ENCODE measurements at regions of chr6 and their contacts with region 1.

Region 1: GRCh38 chr6:111997078-111997852 is 56.6 kb upstream of the CCN6 start:
- DNase-seq: peak; percentile 81 to 88
- H3K4me3 ChIP-seq: no peak overlapping the region
- H3K27ac ChIP-seq: peak overlapping the region in 1 of 3 donors; percentile 30
- H3K4me1 ChIP-seq: peaks cover 0 to 10% of the 10 kb centered on the region in 2 donors
- H3K27me3 ChIP-seq: no peaks in the 10 kb centered on the region
- CTCF ChIP-seq: peak; percentile 61 to 98 (median 92)
- POLR2A ChIP-seq: no peak

Region 2: DNA sequence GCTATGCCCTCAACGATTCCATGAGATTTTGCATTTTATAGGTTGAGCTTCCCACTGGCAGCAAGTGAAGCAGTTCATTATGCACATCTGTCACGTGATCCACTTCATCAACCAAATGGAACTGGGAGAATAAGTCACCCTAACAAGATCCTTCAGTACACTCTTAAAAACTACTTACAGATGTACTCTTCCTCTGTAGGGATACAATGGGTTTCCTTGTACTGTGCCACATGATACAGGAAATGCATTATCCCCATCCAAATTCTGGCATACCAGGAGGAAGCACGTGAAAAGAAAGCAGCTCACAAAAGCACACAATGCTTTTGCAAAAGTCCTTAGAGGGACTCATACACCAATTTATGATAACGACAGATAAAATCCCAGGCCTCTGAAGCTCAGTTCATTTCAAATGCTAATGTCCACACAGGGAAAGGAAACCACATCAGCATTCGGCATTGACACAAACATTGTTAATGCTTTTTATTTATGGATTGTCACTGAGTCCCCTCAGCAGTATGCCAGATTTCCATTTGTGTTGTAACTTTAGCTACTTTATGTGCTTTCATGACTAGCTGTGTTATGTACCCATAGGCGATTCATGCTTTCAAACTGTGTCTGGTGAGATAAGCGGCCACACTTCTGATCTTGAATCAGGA is 456.1 kb before region 1 on chr6:
- intact Hi-C with region 1: no loop called
- DNase-seq: no peak
- H3K4me3 ChIP-seq: no peak overlapping the region
- H3K27ac ChIP-seq: no peak overlapping the region
- H3K4me1 ChIP-seq: peaks cover 10 to 23% of the 10 kb centered on the region in 2 donors
- H3K27me3 ChIP-seq: no peaks in the 10 kb centered on the region
- CTCF ChIP-seq: no peak
- POLR2A ChIP-seq: no peak

Region 3: DNA sequence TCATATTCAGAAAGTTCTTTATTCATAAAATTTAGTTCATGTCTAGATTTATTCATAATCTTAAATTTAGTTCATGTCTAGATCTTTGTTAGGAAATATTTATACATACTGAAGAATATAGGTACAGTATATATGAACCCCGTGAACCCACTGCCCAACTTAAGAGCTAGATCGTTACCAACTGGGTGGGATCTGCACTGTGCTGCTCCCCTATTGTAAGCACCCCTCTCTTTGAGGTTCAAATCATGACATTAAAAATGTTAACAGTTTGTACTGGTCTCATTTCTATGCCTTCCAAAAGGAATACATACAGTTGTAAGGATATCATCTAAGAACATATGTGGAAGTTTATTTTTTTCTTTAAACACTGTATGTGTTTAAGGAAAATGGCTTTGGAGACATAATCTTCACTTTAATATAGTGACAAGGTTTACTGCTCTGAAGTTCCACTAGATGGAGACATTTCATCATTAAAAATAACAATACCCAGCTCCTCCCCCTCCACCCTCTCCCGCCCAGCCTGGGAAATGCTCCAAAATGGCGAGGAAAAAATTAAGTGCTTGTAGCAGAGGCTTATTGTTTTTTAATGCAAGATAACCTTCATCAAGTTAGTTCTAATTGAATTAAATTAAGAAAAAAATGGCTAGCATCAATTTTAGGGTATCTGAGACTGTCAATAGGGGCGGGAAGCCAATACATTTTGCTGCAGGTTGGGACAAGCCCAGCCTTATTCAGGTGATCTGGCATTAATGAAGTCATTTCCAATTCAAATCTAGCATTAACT is 287.5 kb before region 1 on chr6:
- intact Hi-C with region 1: loop called (anchors 5 kb)
- DNase-seq: peak; percentile 59 to 76
- H3K4me3 ChIP-seq: no peak overlapping the region
- H3K27ac ChIP-seq: peak overlapping the region in 1 of 3 donors; percentile 2
- H3K4me1 ChIP-seq: peaks cover 4 to 20% of the 10 kb centered on the region in 2 donors
- H3K27me3 ChIP-seq: no peaks in the 10 kb centered on the region
- CTCF ChIP-seq: peak; percentile 41 to 97 (median 75)
- POLR2A ChIP-seq: no peak

Region 4: DNA sequence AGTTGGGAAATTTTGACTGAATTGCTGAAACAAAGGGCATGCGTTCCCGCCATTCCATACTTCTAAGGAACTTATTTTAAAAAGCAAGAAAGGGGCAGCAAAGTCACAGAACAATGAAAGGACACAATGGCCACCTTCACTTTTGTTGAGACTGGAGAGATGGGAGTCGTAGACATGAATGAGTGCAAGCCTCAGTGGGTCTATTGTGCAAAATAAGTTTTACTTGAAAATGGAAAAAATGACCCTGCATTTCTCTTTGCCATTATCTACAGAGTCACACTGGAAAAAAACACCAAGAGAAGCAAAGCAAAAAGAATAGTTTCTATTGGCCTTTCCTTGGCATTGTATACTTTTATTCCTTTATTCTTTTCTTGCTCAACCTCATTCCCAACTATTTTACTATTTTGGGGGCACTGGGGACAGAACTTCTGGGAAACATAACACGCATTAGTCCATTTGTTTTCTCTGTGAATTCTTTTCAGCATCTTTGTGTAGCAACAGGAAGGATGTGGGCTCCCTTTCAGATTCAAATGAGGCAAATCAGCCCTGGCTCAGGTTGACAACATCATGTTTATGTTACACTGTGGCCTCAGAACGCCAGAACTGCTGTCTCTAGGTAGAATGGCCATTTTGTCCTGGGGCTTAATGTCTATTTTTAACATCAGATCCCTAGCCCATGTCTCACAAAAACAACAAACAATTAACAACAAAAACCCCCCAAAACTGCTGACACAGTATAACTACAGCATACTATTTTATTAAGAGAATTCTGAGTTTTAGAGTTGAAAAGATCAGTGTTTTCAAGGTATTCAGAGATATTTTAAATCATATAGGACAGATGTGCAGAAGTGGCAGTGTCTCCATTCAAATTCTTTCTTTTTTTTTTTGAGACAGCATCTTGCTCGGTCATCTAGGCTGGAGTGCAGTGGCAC is 246.2 kb before region 1 on chr6:
- intact Hi-C with region 1: no loop called
- DNase-seq: no peak
- H3K4me3 ChIP-seq: no peak overlapping the region
- H3K27ac ChIP-seq: peak overlapping the region in 1 of 3 donors; percentile 12
- H3K4me1 ChIP-seq: peaks cover 0 to 15% of the 10 kb centered on the region in 2 donors
- H3K27me3 ChIP-seq: no peaks in the 10 kb centered on the region
- CTCF ChIP-seq: no peak
- POLR2A ChIP-seq: no peak

Region 5: DNA sequence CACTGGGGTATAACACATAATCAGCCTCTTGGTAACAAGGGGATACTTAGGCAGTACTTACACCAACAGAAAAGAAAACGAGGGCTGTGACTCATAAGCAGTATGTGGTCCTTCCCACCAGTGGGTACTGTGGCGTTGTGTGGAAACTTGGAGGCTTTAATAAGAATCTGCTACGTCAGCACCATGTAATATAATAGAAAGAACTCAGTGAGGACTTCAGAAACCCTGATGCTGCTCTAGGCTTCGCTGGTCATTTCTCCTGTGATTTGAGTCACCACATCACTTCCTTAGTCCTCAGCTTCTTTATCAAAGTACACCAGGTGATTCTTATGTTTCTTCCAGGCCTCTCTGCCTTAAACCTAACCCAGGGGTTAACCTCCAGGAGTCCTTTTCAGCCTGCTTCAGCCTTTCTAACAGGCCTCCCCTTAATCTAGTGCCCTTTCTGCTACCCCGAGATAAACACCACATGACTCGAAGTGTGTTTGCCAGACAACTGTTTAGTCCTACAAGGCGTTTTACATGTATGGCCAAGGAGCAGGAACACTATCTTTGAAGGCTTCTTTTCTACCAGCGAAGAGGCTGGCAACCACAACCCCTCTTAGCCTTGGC is 192.5 kb before region 1 on chr6:
- intact Hi-C with region 1: loop called (anchors 10 kb)
- DNase-seq: peak; percentile 76 to 77
- H3K4me3 ChIP-seq: no peak overlapping the region
- H3K27ac ChIP-seq: peak overlapping the region; percentile 24 to 84 (median 83)
- H3K4me1 ChIP-seq: peaks cover 38 to 78% of the 10 kb centered on the region in 2 donors
- H3K27me3 ChIP-seq: no peaks in the 10 kb centered on the region
- CTCF ChIP-seq: peak in 2 of 6 experiments; percentile 27 to 36
- POLR2A ChIP-seq: no peak

Region 6: GRCh38 chr6:111850295-111850937 is 146.8 kb before region 1 on chr6:
- intact Hi-C with region 1: no loop called
- DNase-seq: no peak
- H3K4me3 ChIP-seq: no peak overlapping the region
- H3K27ac ChIP-seq: no peak overlapping the region
- H3K4me1 ChIP-seq: peaks cover 6 to 37% of the 10 kb centered on the region in 2 donors
- H3K27me3 ChIP-seq: no peaks in the 10 kb centered on the region
- CTCF ChIP-seq: no peak
- POLR2A ChIP-seq: no peak

Region 7: DNA sequence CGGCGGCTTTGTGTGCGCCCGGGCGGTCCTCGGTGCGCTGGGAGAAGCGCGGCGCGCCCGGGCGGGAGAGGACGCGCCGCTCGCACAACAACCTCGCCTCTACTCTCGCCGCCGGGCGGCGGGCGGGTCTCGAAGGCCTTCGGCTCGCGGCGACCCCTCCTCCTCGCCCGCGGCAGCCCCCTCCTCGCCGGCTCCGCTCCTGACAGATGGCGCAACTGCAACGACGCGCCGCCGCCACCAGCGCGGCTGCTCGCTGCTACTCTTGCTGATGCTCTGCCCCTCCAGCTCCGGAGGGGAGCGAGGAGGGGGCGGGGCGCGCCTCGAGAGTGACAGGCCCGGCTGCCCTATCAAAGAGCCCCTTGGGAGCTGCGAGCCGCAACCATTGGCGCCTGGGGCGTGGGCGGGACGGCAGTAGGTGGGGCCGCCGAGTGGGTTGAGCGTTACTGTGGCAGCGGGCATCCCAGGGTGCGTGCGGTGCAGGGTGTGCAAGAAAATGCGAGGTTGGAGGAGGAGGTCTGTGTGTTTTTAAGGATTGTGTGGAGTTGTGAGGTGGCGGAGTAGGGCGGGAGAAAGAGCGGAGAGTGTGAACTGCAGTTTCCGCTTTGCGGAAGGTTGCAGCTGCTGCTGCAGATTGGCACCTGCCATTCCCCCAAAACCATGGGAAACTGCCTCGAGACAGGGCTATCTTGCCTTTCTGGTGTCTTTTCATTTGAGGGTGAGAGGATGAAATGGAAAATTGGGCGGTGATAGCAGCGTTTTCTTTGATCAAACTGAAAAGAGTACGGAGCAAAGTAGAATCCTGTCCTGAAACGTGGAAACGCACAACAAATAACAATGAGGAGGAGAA is 123.9 kb before region 1 on chr6 and contains the start of gene FYN:
- intact Hi-C with region 1: loop called (anchors 10 kb)
- DNase-seq: peak; percentile 98 to 99
- H3K4me3 ChIP-seq: peak within 1 kb of the TSS; percentile 35 to 62 (median 57)
- H3K27ac ChIP-seq: peak within 1 kb of the TSS; percentile 48 to 73 (median 68)
- H3K4me1 ChIP-seq: peaks cover 0 to 24% of the 10 kb centered on the region in 2 donors
- H3K27me3 ChIP-seq: no peaks in the 10 kb centered on the region
- CTCF ChIP-seq: peak in 5 of 6 experiments; percentile 24 to 73 (median 51)
- POLR2A ChIP-seq: peak; percentile 0 to 95
- total RNA-seq, gene FYN: 67.0 to 206 (median 95.9) TPM